Activated CD4-positive, alpha-beta T cell treated with anti-CD3 and anti-CD28 coated beads for 36 hours (primary cell): ENCODE measurements at regions of chr17 and their contacts with region 1.

Region 1: DNA sequence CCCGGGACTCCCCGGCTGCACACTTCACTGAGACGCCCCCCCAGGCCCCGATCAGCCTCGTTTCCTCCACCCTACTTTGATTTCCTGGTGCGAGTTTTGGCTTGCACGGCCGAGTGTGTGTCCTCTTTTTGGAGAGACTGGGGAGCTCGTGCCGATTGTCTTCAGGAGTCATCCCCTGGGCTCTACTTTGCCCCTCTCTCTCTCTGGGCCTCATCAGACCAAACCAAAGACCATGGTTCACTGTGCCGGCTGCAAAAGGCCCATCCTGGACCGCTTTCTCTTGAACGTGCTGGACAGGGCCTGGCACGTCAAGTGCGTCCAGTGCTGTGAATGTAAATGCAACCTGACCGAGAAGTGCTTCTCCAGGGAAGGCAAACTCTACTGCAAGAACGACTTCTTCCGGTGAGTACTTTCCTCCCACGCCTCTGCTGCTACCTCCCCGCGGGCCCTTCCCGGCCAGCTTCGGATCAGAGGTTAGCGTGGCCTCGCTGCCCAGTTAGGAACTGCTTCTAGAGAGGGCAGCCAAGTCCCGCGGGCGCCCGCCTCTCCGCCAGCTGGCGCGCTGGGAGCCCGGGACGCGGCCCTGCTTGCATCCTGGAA is 791 bp downstream of the LHX1 start:
- DNase-seq: peak; percentile 60
- ATAC-seq: peak; percentile 44
- H3K4me3 Mint-ChIP-seq: peak overlapping the region; percentile 60
- H3K27ac Mint-ChIP-seq: peak overlapping the region; percentile 60
- H3K4me1 Mint-ChIP-seq: peaks cover 65% of the 10 kb centered on the region
- H3K27me3 Mint-ChIP-seq: peaks cover 75% of the 10 kb centered on the region

Region 2: GRCh38 chr17:36807496-36808180 is 130.4 kb before region 1 on chr17:
- CTCF ChIA-PET with region 1: no interaction called
- POLR2A ChIA-PET with region 1: no interaction called
- intact Hi-C with region 1: loop called in 1 of 2 experiments (anchors 2 kb)
- DNase-seq: no peak
- ATAC-seq: no peak
- H3K4me3 Mint-ChIP-seq: no peak overlapping the region
- H3K27ac Mint-ChIP-seq: no peak overlapping the region
- H3K4me1 Mint-ChIP-seq: no peaks in the 10 kb centered on the region
- H3K27me3 Mint-ChIP-seq: peaks cover 52% of the 10 kb centered on the region

Region 3: GRCh38 chr17:37092071-37092470 is 154.0 kb after region 1 on chr17:
- CTCF ChIA-PET with region 1: no interaction called
- POLR2A ChIA-PET with region 1: no interaction called
- intact Hi-C with region 1: no loop called
- DNase-seq: no peak
- ATAC-seq: no peak
- H3K4me3 Mint-ChIP-seq: no peak overlapping the region
- H3K27ac Mint-ChIP-seq: no peak overlapping the region
- H3K4me1 Mint-ChIP-seq: peaks cover 35% of the 10 kb centered on the region
- H3K27me3 Mint-ChIP-seq: no peaks in the 10 kb centered on the region